K562 (cell line): ENCODE measurements at regions of chr16 and their contacts with region 1.

Region 1: DNA sequence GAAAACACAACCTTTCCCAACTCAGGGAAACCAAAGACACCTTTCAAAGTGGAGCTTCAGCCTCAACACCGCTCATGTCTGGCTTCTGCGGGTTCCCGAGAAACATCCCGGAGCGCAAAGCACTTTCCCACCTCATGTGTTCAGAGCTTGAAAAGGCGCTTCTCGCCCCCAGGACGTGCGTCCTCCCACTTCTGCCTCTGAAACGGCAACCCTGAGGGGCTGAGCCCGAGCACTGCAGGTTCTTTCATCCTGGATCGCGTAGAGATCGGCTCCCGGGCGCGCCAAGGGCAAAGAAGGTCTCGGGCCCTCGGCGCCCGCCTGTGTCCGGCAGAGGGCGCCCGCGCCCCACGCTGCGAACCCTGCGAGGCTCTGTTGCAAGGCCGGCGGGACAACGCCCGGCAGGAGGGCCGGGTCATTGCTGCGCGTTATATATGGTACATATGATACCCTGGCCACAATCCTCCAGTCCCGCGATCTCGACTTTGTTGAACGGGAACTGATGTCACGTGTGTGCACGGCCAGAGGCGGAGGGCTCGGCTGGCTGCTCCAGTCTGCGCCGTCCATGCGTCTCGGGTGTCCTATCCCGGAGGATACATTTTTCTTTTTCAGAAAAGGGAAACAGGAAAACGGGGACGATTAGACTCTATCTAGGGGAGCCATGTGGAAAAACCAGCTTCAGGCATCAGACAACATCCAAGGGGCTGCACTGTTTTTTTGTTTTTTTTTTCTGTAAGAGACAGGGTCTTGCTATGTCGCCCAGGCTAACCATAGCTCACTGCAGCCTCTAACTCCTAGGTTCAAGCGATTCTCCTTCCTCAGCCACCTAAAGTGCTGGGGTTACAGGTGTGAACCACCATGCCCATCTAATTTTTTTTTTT is 19.1 kb downstream of the COQ7 start:
- DNase-seq: peak; percentile 84 to 89 (median 89)
- ATAC-seq: peak; percentile 99
- H3K4me3 ChIP-seq: peak overlapping the region; percentile 24
- H3K27ac ChIP-seq: no peak overlapping the region
- H3K4me1 ChIP-seq: peaks cover 10 to 13% of the 10 kb centered on the region in 2 experiments; a peak in 4 of 5 replicates
- H3K27me3 ChIP-seq: no peaks in the 10 kb centered on the region
- CTCF ChIP-seq: peak; percentile 96 to 97 (median 96)
- EP300 ChIP-seq: no peak; the same call in 1 of the 2 replicates
- POLR2A ChIP-seq: no peak
- RAD21 ChIP-seq: peak; percentile 98 to 99

Region 2: GRCh38 chr16:18983565-18984424 is 102.8 kb before region 1 on chr16 and contains the start of gene TMC7:
- CTCF ChIA-PET with region 1: no interaction called
- POLR2A ChIA-PET with region 1: no interaction called
- in situ Hi-C with region 1: no loop called
- intact Hi-C with region 1: loop called (anchors 5 kb)
- DNase-seq: peak; percentile 87 to 92 (median 90)
- ATAC-seq: peak; percentile 100
- H3K4me3 ChIP-seq: peak within 1 kb of the TSS; percentile 73
- H3K27ac ChIP-seq: 0 out of 3 replicates have a peak within 1 kb of the TSS, but pooled peaks have one; percentile 23
- H3K4me1 ChIP-seq: peaks cover 0 to 7% of the 10 kb centered on the region in 2 experiments; a peak in 3 of 5 replicates
- H3K27me3 ChIP-seq: no peaks in the 10 kb centered on the region; a peak in 3 of 5 replicates
- CTCF ChIP-seq: peak; percentile 89 to 99 (median 99)
- EP300 ChIP-seq: 0 out of 2 replicates have a peak, but pooled peaks have one; percentile 21
- POLR2A ChIP-seq: no peak; the same call in 1 of the 2 replicates
- RAD21 ChIP-seq: peak; percentile 80 to 92
- polyA plus RNA-seq, gene TMC7: 0.08 to 0.32 TPM

Region 3: DNA sequence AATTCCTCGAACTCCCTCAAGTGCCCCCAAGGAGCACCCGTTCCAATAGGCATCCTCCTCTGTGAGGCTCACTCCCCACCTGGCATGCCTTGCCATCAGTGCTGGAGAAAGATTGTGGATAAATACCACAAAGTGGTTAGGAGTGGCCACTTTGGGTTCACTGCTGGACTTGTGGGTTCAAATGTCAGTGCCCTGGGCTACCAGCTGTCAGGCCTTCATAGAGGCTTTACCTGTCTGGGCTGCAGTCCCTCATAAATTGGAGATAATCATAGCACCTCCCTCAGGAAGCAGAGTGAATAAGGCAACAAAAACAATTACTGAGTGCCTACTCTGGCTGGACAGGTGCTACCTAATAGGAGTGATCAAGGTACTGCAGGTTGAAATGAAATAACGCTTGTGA is 80.0 kb after region 1 on chr16:
- CTCF ChIA-PET with region 1: interaction called, 7 read pairs
- POLR2A ChIA-PET with region 1: no interaction called
- in situ Hi-C with region 1: no loop called
- intact Hi-C with region 1: loop called (anchors 1 kb)
- DNase-seq: peak in 1 of 4 experiments; percentile 11
- ATAC-seq: no peak; the same call in 2 of the 3 replicates
- H3K4me3 ChIP-seq: no peak overlapping the region
- H3K27ac ChIP-seq: no peak overlapping the region
- H3K4me1 ChIP-seq: peaks cover 0 to 17% of the 10 kb centered on the region in 2 experiments; a peak in 2 of 5 replicates
- H3K27me3 ChIP-seq: peaks cover 12 to 38% of the 10 kb centered on the region in 2 experiments; a peak in 4 of 5 replicates
- CTCF ChIP-seq: peak in 2 of 3 experiments; percentile 13 to 23; a peak in 1 of 6 replicates
- EP300 ChIP-seq: no peak
- POLR2A ChIP-seq: no peak
- RAD21 ChIP-seq: peak in 1 of 2 experiments; percentile 23; a peak in 1 of 4 replicates

Region 4: GRCh38 chr16:19179546-19180490 is 93.3 kb after region 1 on chr16:
- CTCF ChIA-PET with region 1: interaction called, 22 read pairs
- POLR2A ChIA-PET with region 1: interaction called, 7 read pairs
- in situ Hi-C with region 1: loop called (anchors 5 kb)
- intact Hi-C with region 1: loop called (anchors 2 kb)
- DNase-seq: peak; percentile 73 to 81 (median 78)
- ATAC-seq: peak; percentile 96
- H3K4me3 ChIP-seq: no peak overlapping the region
- H3K27ac ChIP-seq: no peak overlapping the region
- H3K4me1 ChIP-seq: no peaks in the 10 kb centered on the region
- H3K27me3 ChIP-seq: peaks cover 35 to 61% of the 10 kb centered on the region in 2 experiments
- CTCF ChIP-seq: peak; percentile 77 to 88 (median 86)
- EP300 ChIP-seq: no peak
- POLR2A ChIP-seq: no peak
- RAD21 ChIP-seq: peak; percentile 62 to 77

Region 5: GRCh38 chr16:19375561-19376158 is 289.1 kb after region 1 on chr16:
- CTCF ChIA-PET with region 1: interaction called, 29 read pairs
- POLR2A ChIA-PET with region 1: interaction called, 3 read pairs
- in situ Hi-C with region 1: loop called (anchors 5 kb)
- intact Hi-C with region 1: loop called (anchors 1 kb)
- DNase-seq: peak; percentile 65 to 70 (median 70)
- ATAC-seq: peak; percentile 78
- H3K4me3 ChIP-seq: no peak overlapping the region
- H3K27ac ChIP-seq: no peak overlapping the region
- H3K4me1 ChIP-seq: no peaks in the 10 kb centered on the region
- H3K27me3 ChIP-seq: no peaks in the 10 kb centered on the region
- CTCF ChIP-seq: peak; percentile 73 to 88 (median 73)
- EP300 ChIP-seq: no peak
- POLR2A ChIP-seq: no peak
- RAD21 ChIP-seq: peak; percentile 85 to 94

Region 6: GRCh38 chr16:19521471-19522396 is 435.2 kb after region 1 on chr16 and contains the start of gene GDE1:
- CTCF ChIA-PET with region 1: no interaction called
- POLR2A ChIA-PET with region 1: interaction called, 3 read pairs
- in situ Hi-C with region 1: loop called (anchors 10 kb)
- intact Hi-C with region 1: no loop called
- DNase-seq: peak; percentile 94 to 98 (median 97)
- ATAC-seq: peak; percentile 87
- H3K4me3 ChIP-seq: peak within 1 kb of the TSS; percentile 73
- H3K27ac ChIP-seq: peak within 1 kb of the TSS; percentile 84
- H3K4me1 ChIP-seq: peaks cover 27 to 50% of the 10 kb centered on the region in 2 experiments; a peak in 4 of 5 replicates
- H3K27me3 ChIP-seq: no peaks in the 10 kb centered on the region
- CTCF ChIP-seq: peak; percentile 56 to 59 (median 58); a peak in 5 of 6 replicates
- EP300 ChIP-seq: no peak
- POLR2A ChIP-seq: peak; percentile 78
- RAD21 ChIP-seq: no peak; a peak in 1 of 4 replicates
- polyA plus RNA-seq, gene GDE1: 18.8 to 21.7 TPM